GM10248 (cell line): ENCODE measurements at regions of chr19 and their contacts with region 1.

Region 1: DNA sequence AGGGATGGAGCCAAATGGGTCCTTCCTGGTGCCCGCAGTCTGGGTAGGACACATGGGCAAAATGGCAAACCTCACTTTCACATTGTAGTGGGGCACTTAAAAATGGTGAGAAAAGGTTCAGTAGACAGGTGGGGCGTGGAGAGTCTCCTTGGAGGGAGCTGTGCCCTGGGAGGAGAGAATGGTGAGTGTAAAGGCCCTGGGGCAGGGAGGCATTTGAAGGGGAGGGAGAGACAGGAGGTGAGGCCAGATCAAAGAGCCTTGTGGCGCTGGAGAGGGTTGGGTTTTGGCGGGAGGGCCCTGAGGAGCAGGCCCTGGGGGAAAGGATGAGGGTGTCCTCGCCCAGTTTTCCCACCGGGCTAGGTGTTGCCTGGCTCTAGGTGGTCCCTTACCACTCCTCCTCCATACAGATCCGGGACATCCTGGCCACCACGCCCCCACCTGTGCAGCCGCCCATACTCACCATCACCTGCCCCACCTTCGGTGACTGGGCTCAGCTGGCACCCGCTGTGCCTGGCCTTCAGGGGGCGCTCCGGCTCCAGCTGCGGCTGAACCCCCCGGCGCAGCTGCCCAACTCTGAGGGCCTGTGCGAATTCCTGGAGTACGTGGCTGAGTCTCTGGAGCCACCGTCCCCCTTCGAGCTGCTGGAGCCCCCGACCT is 6.3 kb downstream of the MAP1S start:
- DNase-seq: no peak
- CTCF ChIP-seq: peak; percentile 67

Region 2: GRCh38 chr19:17579661-17580244 is 145.8 kb before region 1 on chr19:
- CTCF ChIA-PET with region 1: no interaction called
- POLR2A ChIA-PET with region 1: no interaction called
- DNase-seq: peak; percentile 83
- CTCF ChIP-seq: no peak

Region 3: GRCh38 chr19:17687857-17688784 is 37.4 kb before region 1 on chr19 and contains the start of gene UNC13A:
- CTCF ChIA-PET with region 1: no interaction called
- POLR2A ChIA-PET with region 1: no interaction called
- DNase-seq: peak; percentile 72
- CTCF ChIP-seq: no peak

Region 4: DNA sequence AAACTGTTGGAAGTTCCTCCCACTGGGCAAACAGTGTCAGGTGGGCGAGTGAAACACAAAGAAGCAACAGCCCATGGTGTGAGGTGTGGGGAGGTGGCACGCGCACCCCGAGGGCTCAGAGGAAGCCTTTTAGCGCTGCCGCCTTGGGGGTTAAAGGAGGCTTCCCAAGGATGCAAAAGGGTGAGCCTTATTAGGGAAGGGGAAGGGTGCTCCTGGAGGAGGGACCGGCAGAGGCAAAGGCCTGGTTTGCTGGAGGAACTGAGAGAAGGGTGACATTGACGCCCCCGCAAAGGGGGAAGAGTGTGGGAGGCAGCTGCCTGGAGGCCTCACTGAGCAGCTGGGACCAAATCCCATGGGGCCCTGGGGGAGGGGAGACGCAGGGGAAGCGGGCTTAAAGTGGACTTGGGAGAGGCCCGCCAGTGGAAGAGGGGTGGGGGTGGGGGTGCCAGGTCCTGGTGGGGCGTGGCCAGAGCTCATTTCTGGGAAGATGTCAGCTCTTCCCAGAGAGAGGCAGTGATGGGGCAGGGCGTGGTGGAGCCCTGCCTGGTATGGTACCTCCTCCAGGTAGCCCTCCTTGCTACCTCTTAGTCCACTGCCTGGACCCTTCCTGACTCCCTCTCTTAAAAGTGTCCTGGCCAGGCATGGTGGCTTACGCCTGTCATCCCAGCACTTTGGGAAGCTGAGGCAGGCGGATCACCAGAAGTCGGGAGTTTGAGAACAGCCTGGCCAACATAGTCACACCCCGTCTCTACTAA is 13.7 kb after region 1 on chr19:
- CTCF ChIA-PET with region 1: interaction called, 12 read pairs
- POLR2A ChIA-PET with region 1: no interaction called
- DNase-seq: peak; percentile 78
- CTCF ChIP-seq: no peak

Region 5: GRCh38 chr19:17775245-17775916 is 49.8 kb after region 1 on chr19:
- CTCF ChIA-PET with region 1: interaction called, 15 read pairs
- POLR2A ChIA-PET with region 1: interaction called, 10 read pairs
- DNase-seq: no peak
- CTCF ChIP-seq: peak; percentile 38

Region 6: DNA sequence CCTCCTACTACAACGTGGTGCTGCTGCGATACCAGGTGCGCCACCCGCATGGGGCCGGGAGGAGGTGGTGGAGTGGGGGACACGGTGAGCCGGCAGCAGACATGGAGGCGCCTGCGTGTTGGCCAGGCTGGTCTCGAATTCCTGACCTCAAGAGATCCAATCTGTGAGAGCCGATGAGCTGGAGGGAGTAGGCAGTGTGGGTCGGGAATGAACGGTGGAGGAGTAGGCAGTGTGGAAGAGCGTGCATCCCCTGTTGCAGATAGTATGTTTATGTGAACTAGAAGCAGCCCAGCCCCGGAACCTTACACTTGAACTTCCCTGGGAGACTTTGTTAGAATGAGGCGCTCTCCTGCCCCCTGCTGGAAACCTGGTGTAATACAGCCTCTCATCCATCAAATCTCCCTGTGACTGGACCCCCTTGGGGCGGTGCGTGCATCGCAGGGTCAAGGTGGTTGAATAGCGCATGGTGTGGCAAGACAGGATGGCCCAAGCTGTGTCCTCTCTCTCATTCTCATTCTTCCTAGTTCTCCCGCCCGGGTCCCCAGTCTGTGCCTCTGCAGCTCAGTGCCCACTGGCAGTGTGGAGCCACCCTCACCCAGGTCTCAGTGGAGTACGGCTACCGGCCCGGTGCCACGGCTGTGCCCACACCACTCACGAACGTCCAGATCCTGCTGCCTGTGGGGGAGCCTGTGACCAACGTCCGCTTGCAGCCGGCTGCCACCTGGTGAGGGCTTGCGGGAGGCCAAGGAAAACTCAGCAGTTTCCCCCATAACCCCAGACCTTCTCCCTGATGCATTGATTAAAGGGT is 58.9 kb after region 1 on chr19:
- CTCF ChIA-PET with region 1: interaction called, 11 read pairs
- POLR2A ChIA-PET with region 1: no interaction called
- DNase-seq: peak; percentile 85
- CTCF ChIP-seq: peak; percentile 76

Region 7: DNA sequence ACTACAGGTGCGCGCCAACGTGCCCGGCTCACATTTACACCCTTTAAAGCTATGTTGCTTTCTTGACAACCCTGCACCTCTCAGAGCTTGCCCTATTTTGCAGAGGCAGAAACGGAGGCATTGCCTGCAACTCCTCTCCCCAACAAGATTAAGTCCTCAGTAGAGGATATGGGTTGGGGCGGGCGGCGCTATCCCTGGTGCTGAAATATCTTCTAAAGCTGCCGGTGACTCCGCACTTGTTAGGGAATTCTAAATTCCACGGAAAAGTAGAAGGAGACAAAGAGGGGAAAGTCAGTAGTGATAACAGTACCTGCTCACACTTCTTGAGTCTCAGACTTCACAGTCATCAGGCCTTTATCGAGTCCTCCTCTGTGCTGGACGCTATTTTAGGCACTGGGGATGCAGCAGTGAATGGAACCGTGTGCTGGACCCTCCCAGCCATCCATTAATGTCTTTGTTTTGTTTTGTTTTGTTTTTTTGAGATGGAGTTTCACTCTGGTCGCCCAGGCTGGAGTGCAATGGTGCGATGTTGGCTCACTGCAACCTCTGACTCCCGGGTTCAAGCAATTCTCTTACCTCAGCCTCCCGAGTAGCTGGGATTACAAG is 164.2 kb after region 1 on chr19:
- CTCF ChIA-PET with region 1: no interaction called
- POLR2A ChIA-PET with region 1: no interaction called
- DNase-seq: no peak
- CTCF ChIP-seq: no peak